Natural killer cell (primary cell): ENCODE measurements at regions of chr15 and their contacts with region 1.

Region 1: GRCh38 chr15:69713726-69714559 is 261.3 kb downstream of the RPLP1 start:
- DNase-seq: peak; percentile 65 to 91
- ATAC-seq: peak; percentile 84 to 91 (median 89)
- H3K4me3 ChIP-seq: no peak overlapping the region
- H3K4me3 Mint-ChIP-seq: peak overlapping the region; percentile 81
- H3K27ac ChIP-seq: peak overlapping the region; percentile 67
- H3K27ac Mint-ChIP-seq: peak overlapping the region; percentile 87 to 90
- H3K4me1 ChIP-seq: peaks cover 62% of the 10 kb centered on the region
- H3K4me1 Mint-ChIP-seq: peaks cover 65 to 72% of the 10 kb centered on the region in 2 donors
- H3K27me3 ChIP-seq: no peaks in the 10 kb centered on the region
- H3K27me3 Mint-ChIP-seq: no peaks in the 10 kb centered on the region
- CTCF ChIP-seq: no peak

Region 2: GRCh38 chr15:68768321-68768720 is 945.6 kb before region 1 on chr15:
- intact Hi-C with region 1: no loop called
- DNase-seq: no peak
- ATAC-seq: no peak
- H3K4me3 ChIP-seq: no peak overlapping the region
- H3K4me3 Mint-ChIP-seq: no peak overlapping the region
- H3K27ac ChIP-seq: no peak overlapping the region
- H3K27ac Mint-ChIP-seq: no peak overlapping the region
- H3K4me1 ChIP-seq: no peaks in the 10 kb centered on the region
- H3K4me1 Mint-ChIP-seq: peaks cover 0 to 8% of the 10 kb centered on the region in 2 donors
- H3K27me3 ChIP-seq: no peaks in the 10 kb centered on the region
- H3K27me3 Mint-ChIP-seq: peaks cover 2 to 5% of the 10 kb centered on the region in 2 donors
- CTCF ChIP-seq: no peak

Region 3: GRCh38 chr15:69491038-69491505 is 222.9 kb before region 1 on chr15:
- intact Hi-C with region 1: loop called (anchors 10 kb)
- DNase-seq: no peak
- ATAC-seq: no peak
- H3K4me3 ChIP-seq: no peak overlapping the region
- H3K4me3 Mint-ChIP-seq: no peak overlapping the region
- H3K27ac ChIP-seq: no peak overlapping the region
- H3K27ac Mint-ChIP-seq: no peak overlapping the region
- H3K4me1 ChIP-seq: peaks cover 29% of the 10 kb centered on the region
- H3K4me1 Mint-ChIP-seq: peaks cover 37 to 46% of the 10 kb centered on the region in 2 donors
- H3K27me3 ChIP-seq: no peaks in the 10 kb centered on the region
- H3K27me3 Mint-ChIP-seq: peaks cover 0 to 2% of the 10 kb centered on the region in 2 donors
- CTCF ChIP-seq: no peak

Region 4: DNA sequence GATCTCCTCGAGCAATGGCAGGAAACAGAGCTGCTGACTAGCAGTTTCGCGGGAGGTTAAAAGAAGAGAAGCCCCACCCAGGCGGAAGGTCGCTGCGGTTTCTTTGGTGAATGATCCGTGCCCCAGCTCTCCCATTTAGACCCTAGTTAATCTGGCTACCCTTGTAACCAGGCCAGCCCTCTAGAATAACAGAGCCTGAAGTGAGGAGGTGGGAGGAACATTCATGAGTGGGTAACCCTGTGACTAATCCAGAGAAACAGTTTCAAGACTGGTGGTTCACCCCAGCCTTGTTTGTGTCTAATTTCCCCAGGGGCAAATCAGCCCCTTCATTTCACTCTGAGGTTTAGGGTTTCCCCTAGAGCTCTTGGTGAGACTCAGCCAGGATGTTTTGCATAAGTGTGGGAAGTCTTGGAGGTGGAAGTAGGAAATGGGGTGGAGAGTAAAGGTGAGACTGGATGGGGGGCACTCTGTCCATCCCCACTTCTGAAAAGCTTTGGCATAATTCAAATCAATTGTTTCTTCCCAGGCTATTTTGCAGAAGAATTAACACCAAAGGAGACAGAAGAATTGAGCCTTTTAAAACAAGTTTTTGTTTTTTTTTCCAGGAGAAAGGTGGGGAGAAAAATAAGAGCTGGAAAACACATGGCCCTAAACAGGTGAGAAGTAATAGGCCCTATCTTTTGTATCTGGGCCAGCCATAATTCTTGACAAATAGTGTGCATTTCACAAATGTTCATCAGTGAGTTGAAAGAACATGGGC is 41.8 kb after region 1 on chr15:
- intact Hi-C with region 1: loop called (anchors 1 kb)
- DNase-seq: peak; percentile 34 to 83
- ATAC-seq: peak; percentile 45 to 59 (median 58)
- H3K4me3 ChIP-seq: no peak overlapping the region
- H3K4me3 Mint-ChIP-seq: peak overlapping the region; percentile 85
- H3K27ac ChIP-seq: peak overlapping the region; percentile 33
- H3K27ac Mint-ChIP-seq: peak overlapping the region; percentile 73 to 84
- H3K4me1 ChIP-seq: peaks cover 72% of the 10 kb centered on the region
- H3K4me1 Mint-ChIP-seq: peaks cover 67 to 71% of the 10 kb centered on the region in 2 donors
- H3K27me3 ChIP-seq: peaks cover 14% of the 10 kb centered on the region
- H3K27me3 Mint-ChIP-seq: peaks cover 60 to 73% of the 10 kb centered on the region in 2 donors
- CTCF ChIP-seq: no peak

Region 5: DNA sequence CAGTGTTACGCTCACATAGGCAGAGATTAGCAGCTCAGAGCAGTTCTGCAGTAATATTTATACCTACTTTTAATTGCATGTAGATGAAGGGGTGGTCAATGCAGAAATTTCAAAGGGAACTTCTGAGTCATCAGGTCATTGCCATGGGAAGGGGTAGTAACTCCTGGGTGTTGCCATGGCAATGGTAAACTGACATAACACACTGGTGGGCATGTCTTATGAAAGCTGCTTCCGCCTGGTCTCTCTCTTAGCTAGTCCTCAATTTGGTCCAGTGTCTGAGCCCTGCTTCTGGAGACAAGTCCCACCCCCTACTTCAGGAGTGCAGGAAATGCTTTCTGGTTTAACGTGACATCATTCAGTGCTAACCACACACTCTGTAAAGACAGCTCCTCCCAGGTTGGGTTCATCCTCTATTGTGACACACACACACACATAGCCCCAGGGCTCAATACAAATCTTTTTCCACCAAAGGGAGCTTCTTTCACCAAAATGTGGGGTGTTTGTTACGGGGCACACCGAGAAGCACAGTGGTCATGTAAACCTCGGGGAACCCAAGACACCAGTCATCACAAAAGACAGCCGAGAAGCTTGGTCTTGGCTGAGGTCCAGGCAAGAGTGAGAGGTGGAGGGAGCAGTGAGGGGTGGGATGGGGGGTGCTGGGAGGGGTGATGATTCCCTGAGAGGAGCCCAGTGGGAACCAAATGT is 309.3 kb after region 1 on chr15:
- intact Hi-C with region 1: loop called (anchors 2 kb)
- DNase-seq: peak; percentile 47 to 89
- ATAC-seq: peak; percentile 95 to 99 (median 95)
- H3K4me3 ChIP-seq: no peak overlapping the region
- H3K4me3 Mint-ChIP-seq: peak overlapping the region; percentile 42
- H3K27ac ChIP-seq: peak overlapping the region; percentile 32
- H3K27ac Mint-ChIP-seq: peak overlapping the region; percentile 37 to 86
- H3K4me1 ChIP-seq: peaks cover 20% of the 10 kb centered on the region
- H3K4me1 Mint-ChIP-seq: peaks cover 22 to 30% of the 10 kb centered on the region in 2 donors
- H3K27me3 ChIP-seq: no peaks in the 10 kb centered on the region
- H3K27me3 Mint-ChIP-seq: peaks cover 21 to 50% of the 10 kb centered on the region in 2 donors
- CTCF ChIP-seq: no peak

Region 6: GRCh38 chr15:70299931-70300869 is 586.3 kb after region 1 on chr15:
- intact Hi-C with region 1: loop called (anchors 1 kb)
- DNase-seq: peak; percentile 80 to 87
- ATAC-seq: peak; percentile 91 to 96 (median 94)
- H3K4me3 ChIP-seq: no peak overlapping the region
- H3K4me3 Mint-ChIP-seq: peak overlapping the region; percentile 55
- H3K27ac ChIP-seq: no peak overlapping the region
- H3K27ac Mint-ChIP-seq: peak overlapping the region; percentile 60 to 67
- H3K4me1 ChIP-seq: peaks cover 24% of the 10 kb centered on the region
- H3K4me1 Mint-ChIP-seq: peaks cover 9 to 11% of the 10 kb centered on the region in 2 donors
- H3K27me3 ChIP-seq: peaks cover 66% of the 10 kb centered on the region
- H3K27me3 Mint-ChIP-seq: peaks cover 32% of the 10 kb centered on the region in 2 donors
- CTCF ChIP-seq: no peak